ENCODE measurements at regions of chr13 and their contacts with region 1.

Region 1: DNA sequence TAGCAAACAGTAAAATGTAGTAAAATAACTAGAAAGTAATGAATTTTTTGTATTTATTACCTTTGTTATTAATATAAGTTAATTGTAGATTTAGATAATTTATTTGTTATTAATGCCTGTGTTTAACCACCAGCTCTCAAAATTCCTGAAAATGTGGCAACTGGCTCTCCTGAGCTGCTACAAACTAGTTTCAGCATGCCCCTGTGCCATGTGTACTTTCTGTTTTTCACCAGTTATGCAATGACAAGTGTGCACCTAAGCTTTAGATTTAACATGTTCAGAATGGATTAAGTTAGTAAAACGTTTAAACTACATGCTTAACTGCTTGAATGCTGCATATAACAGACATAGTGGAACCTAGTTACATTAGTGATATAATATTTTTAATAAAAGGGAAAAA is 88.1 kb downstream of the POSTN start:
- DNase-seq: no peak
- ATAC-seq: no peak
- H3K4me3 ChIP-seq: no peak overlapping the region
- H3K27ac ChIP-seq: no peak overlapping the region
- H3K4me1 ChIP-seq: no peaks in the 10 kb centered on the region
- H3K27me3 ChIP-seq: no peaks in the 10 kb centered on the region
- CTCF ChIP-seq: no peak
- EP300 ChIP-seq: no peak
- POLR2A ChIP-seq: no peak
- RAD21 ChIP-seq: no peak

Region 2: DNA sequence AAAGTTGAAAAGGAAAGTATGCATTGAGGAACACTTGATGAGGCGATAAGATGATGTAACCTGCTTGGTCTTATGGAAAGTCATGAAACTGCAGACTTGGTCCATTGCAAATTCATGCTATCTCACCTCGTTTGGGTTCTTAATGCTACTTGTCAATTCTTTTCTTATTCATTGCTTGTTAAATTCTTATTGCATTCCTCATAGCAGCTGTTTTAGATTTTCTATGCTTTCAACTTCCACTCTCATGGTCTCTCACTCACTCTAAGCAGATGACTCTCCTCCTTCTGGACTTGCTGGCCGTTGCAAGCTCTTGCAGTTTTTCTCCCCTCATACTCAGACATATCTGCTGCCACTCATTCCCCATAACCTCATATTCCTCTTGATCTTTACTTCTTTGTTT is 337.2 kb before region 1 on chr13:
- CTCF ChIA-PET with region 1: no interaction called
- POLR2A ChIA-PET with region 1: no interaction called
- in situ Hi-C with region 1: no loop called
- intact Hi-C with region 1: no loop called
- DNase-seq: no peak
- ATAC-seq: no peak
- H3K4me3 ChIP-seq: no peak overlapping the region
- H3K27ac ChIP-seq: no peak overlapping the region
- H3K4me1 ChIP-seq: no peaks in the 10 kb centered on the region
- H3K27me3 ChIP-seq: no peaks in the 10 kb centered on the region
- CTCF ChIP-seq: no peak
- EP300 ChIP-seq: no peak
- POLR2A ChIP-seq: no peak
- RAD21 ChIP-seq: no peak

Region 3: GRCh38 chr13:37495046-37495445 is 15.4 kb before region 1 on chr13:
- CTCF ChIA-PET with region 1: no interaction called
- POLR2A ChIA-PET with region 1: no interaction called
- in situ Hi-C with region 1: no loop called
- intact Hi-C with region 1: loop called (anchors 1 kb)
- DNase-seq: no peak
- ATAC-seq: no peak
- H3K4me3 ChIP-seq: no peak overlapping the region
- H3K27ac ChIP-seq: no peak overlapping the region
- H3K4me1 ChIP-seq: no peaks in the 10 kb centered on the region
- H3K27me3 ChIP-seq: no peaks in the 10 kb centered on the region
- CTCF ChIP-seq: no peak
- EP300 ChIP-seq: no peak
- POLR2A ChIP-seq: no peak
- RAD21 ChIP-seq: no peak

Region 4: GRCh38 chr13:37700887-37701286 is 190.4 kb after region 1 on chr13:
- CTCF ChIA-PET with region 1: no interaction called
- POLR2A ChIA-PET with region 1: no interaction called
- in situ Hi-C with region 1: no loop called
- intact Hi-C with region 1: no loop called
- DNase-seq: no peak
- ATAC-seq: no peak
- H3K4me3 ChIP-seq: no peak overlapping the region
- H3K27ac ChIP-seq: no peak overlapping the region
- H3K4me1 ChIP-seq: no peaks in the 10 kb centered on the region
- H3K27me3 ChIP-seq: no peaks in the 10 kb centered on the region; a peak in 1 of 5 replicates
- CTCF ChIP-seq: no peak
- EP300 ChIP-seq: no peak
- POLR2A ChIP-seq: no peak
- RAD21 ChIP-seq: no peak

Measured in HepG2 (cell line).